Activated B cell treated with CpG ODN at 0.5 μM for 24 hours (primary cell): ENCODE measurements at regions of chr3 and their contacts with region 1.

Region 1: GRCh38 chr3:9932843-9933560 is 632 bp upstream of the CRELD1 start:
- DNase-seq: peak; percentile 83
- ATAC-seq: peak; percentile 71
- H3K4me3 Mint-ChIP-seq: peak overlapping the region; percentile 98
- H3K27ac Mint-ChIP-seq: peak overlapping the region; percentile 98
- H3K4me1 Mint-ChIP-seq: peaks cover 41% of the 10 kb centered on the region
- H3K27me3 Mint-ChIP-seq: no peaks in the 10 kb centered on the region
- CTCF ChIP-seq: peak; percentile 71

Region 2: DNA sequence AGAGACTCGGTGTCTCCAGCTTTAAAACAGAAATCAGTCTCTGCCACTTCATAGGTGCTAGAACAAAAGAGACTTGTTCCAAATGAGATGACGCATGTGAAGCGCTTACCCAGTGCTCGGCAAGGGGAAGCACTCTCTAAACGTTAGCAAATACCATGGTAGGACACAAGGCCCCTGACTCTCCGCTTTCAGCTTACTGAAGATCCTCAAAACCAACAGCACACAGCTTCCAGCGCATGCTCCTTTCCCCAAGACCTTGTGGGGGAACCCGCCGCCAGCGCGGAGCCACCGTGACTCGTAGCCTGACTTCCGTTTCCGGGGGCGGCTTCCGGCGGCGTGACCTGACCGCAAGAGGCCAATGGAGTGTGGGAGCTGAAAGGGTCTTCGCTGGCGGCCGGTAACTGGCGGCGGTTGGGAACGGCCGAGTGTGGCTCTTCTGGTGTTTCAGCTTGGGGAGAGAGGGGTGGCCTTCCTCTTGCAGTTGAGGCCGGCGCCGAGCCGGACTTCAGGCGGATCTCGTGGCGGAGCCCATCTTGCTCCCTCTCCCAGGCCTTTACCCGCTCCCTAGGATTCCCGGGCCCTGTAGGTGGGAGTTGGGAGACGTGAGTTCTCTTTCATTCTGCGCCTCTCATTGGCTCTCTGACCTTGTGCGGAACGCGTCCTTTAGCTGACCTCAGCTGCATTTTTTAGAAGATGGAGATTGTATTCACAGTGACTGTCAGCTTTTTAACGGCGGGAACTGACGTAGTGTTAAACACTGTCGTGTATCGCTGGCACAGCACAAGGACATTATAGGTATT is 570.1 kb before region 1 on chr3 and contains the start of gene THUMPD3:
- CTCF ChIA-PET with region 1: no interaction called
- POLR2A ChIA-PET with region 1: interaction called, 5 read pairs
- intact Hi-C with region 1: loop called (anchors 2 kb)
- DNase-seq: peak; percentile 92
- ATAC-seq: peak; percentile 96
- H3K4me3 Mint-ChIP-seq: peak within 1 kb of the TSS; percentile 99
- H3K27ac Mint-ChIP-seq: peak within 1 kb of the TSS; percentile 98
- H3K4me1 Mint-ChIP-seq: peaks cover 16% of the 10 kb centered on the region
- H3K27me3 Mint-ChIP-seq: no peaks in the 10 kb centered on the region
- CTCF ChIP-seq: no peak
- total RNA-seq, gene THUMPD3: 34.3 and 42.0 TPM in 2 replicates

Region 3: DNA sequence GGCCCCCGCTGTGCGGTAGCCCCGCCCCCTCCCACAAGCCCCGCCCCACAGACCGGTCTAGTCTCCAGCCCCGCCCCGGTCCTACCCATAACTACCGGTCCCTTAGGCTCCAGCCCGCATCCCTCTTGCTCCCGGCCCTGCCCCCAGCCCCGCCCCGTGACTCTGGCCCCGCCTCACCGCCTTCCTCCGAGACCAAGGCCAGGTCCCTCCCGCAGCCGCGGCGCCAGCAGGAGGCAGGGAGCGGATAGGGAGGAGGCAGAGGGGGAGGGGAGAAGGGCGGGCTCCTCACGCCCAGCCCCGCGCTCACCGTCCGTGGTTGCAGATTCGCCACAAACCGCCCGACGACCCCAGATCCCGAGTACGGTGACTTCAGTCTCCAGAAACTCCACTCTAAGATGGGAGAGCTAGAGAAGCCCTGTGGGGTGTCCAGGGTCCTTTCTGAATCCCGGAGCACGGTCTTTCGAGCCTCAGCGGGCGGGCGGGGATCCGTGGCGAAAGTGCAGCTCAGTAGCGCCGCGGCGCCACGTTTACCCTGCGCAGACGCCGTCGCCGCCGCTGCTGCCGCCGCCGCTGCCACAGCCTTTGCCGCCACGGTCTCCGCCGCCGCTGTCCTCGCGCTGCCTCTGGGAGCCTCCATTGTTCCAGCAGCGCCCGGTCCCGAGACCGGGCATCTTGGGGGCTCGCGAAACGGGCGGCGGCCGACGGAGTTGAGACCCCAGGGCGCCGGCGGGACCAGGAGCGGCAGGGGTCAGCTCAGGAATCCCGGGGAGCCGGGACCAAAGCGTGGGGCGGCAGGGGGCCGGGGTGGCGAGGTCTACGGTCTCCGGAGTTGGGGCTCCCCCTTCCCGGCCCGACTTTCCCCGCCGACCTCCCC is 201.6 kb before region 1 on chr3 and contains the start of gene BRPF1:
- CTCF ChIA-PET with region 1: no interaction called
- POLR2A ChIA-PET with region 1: interaction called, 17 read pairs
- intact Hi-C with region 1: loop called (anchors 1 kb)
- DNase-seq: peak; percentile 91
- ATAC-seq: peak; percentile 95
- H3K4me3 Mint-ChIP-seq: peak within 1 kb of the TSS; percentile 95
- H3K27ac Mint-ChIP-seq: peak within 1 kb of the TSS; percentile 99
- H3K4me1 Mint-ChIP-seq: peaks cover 48% of the 10 kb centered on the region
- H3K27me3 Mint-ChIP-seq: no peaks in the 10 kb centered on the region
- CTCF ChIP-seq: no peak
- total RNA-seq, gene BRPF1: 33.5 and 35.2 TPM in 2 replicates

Region 4: DNA sequence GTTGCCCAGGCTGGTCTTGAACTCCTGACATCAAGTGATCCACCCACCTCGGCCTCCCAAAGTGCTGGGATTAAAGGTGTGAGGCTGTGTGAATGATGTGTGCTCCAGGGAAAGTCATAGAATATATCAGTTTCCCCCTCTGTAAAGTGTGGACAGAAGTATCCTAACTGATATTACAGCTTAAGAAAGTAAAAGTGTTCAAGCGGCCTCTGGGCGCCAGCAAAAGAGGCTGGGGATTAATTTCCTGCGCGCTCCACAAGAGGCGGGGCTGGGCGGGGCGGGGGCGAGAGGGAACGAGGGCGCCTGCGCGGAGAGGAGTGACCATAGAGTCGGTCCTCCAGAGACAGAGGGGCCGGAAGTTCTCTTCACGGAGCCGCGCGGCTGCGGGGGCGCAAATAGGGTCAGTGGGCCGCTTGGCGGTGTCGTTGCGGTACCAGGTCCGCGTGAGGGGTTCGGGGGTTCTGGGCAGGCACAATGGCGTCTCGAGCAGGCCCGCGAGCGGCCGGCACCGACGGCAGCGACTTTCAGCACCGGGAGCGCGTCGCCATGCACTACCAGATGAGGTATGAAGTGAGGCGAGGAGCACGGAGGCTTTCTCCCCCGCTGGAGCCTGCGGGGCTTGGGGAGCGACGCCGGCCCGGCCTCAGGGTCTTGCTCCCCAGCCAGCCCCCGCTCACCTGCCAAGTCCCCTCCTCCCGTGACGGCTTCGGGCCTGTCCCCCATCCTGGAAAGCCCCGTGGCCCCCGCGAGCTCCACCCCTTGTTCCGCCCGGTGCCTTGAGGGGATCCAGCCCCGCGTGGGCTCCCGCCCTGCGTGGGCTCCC is 42.5 kb before region 1 on chr3 and contains the start of gene JAGN1:
- CTCF ChIA-PET with region 1: interaction called, 5 read pairs
- POLR2A ChIA-PET with region 1: interaction called, 92 read pairs
- intact Hi-C with region 1: loop called (anchors 1 kb)
- DNase-seq: peak; percentile 85
- ATAC-seq: peak; percentile 86
- H3K4me3 Mint-ChIP-seq: peak within 1 kb of the TSS; percentile 94
- H3K27ac Mint-ChIP-seq: peak within 1 kb of the TSS; percentile 97
- H3K4me1 Mint-ChIP-seq: peaks cover 44% of the 10 kb centered on the region
- H3K27me3 Mint-ChIP-seq: no peaks in the 10 kb centered on the region
- CTCF ChIP-seq: no peak
- total RNA-seq, gene JAGN1: 30.9 and 32.1 TPM in 2 replicates

Region 5: DNA sequence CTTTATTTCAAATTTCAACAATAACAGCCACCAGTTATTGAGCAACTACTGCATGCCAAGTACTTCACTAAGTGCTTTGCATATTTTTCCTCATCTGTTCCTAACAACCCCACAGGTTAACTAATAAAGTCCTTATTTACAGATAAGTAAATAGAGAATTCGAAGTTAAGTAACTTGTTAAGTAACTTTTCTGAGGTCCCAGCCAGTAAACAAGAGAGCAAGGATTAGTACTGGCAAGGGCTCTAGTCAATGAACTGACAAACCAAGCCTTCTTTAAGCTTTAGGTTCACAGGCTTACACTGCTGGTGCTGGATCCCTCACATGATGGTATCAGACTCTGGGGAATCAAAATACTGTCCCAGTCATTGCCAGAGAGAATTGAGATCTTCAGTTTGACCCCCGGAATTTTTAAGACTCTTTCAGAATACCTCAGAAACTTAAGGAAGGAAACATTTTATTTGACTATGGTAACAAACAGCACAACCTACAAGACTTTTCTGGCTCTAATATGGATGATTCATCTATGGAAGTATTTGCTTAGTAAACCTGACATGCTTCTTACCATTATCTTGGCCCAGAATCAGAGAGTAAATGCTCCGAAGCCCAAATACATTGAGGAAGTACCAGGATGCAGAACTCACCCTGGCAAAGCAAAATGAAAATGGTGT is 37.2 kb after region 1 on chr3:
- CTCF ChIA-PET with region 1: no interaction called
- POLR2A ChIA-PET with region 1: no interaction called
- intact Hi-C with region 1: no loop called
- DNase-seq: no peak
- ATAC-seq: no peak
- H3K4me3 Mint-ChIP-seq: no peak overlapping the region
- H3K27ac Mint-ChIP-seq: no peak overlapping the region
- H3K4me1 Mint-ChIP-seq: no peaks in the 10 kb centered on the region
- H3K27me3 Mint-ChIP-seq: no peaks in the 10 kb centered on the region
- CTCF ChIP-seq: no peak

Region 6: DNA sequence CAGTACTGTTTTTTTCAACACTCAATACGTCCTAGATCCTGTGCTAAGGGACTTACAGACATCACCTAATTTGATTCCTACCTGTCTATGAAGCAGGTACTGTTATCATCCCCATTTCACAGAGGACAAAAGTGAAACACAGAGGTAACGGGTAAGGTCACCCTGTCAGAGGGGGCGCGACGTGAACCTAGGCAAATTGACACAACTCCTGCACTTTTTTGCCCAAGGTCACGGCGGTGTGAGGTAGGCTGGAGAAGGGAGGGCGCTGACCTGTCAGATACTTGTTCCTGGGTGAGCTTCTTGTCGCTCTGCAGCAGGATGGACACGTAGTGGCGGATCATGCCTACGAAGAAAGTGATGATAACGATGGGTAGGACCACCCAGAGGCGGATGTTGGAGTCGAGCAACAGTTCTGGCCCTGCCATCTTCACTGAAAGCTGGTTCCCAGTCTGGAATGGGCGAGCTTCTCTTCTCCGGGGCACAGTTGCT is 53.3 kb after region 1 on chr3:
- CTCF ChIA-PET with region 1: interaction called, 4 read pairs
- POLR2A ChIA-PET with region 1: interaction called, 41 read pairs
- intact Hi-C with region 1: loop called (anchors 1 kb)
- DNase-seq: no peak
- ATAC-seq: peak; percentile 28
- H3K4me3 Mint-ChIP-seq: peak overlapping the region; percentile 98
- H3K27ac Mint-ChIP-seq: peak overlapping the region; percentile 100
- H3K4me1 Mint-ChIP-seq: peaks cover 24% of the 10 kb centered on the region
- H3K27me3 Mint-ChIP-seq: no peaks in the 10 kb centered on the region
- CTCF ChIP-seq: no peak

Region 7: DNA sequence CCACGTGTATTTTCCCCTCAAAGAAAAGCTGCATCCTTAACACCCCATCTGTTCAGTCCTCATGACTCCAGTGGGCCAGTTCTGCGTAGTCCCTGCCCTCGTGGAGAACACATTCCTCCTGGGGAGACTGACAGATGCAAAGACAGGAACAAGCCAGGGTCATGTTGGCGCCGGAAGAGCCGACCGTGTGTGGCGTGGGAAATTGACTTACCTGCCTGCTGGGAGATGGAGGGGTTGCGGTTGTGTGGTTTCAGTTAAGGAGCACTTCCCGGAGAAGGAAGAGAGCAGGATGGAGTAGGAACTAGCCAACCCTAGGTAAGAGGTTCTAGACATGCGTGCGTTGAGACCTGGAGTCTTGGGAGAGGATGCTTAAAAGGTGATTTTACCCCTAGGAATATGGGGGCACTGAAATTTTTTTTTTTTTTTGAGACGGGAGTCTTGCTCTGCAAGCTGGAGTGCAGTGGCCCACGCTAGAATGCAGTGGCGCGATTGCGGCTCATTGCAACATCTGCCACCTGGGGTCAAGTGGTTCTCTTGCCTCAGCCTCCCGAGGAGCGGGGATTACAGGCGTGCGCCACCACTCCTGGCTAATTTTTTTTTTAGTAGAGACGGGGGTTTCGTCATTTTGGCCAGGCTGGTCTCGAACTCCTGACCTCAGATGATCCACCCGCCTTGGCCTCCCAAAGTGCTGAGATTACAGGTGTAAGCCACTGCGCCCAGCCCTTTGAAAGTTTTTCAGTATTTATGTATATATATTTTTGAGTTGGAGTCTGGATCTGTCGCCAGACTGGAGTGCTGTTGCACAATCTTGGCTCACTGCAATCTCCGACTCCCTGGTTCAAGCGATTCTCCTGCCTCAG is 209.9 kb after region 1 on chr3:
- CTCF ChIA-PET with region 1: no interaction called
- POLR2A ChIA-PET with region 1: interaction called, 8 read pairs
- intact Hi-C with region 1: loop called (anchors 2 kb)
- DNase-seq: no peak
- ATAC-seq: no peak
- H3K4me3 Mint-ChIP-seq: peak overlapping the region; percentile 97
- H3K27ac Mint-ChIP-seq: peak overlapping the region; percentile 95
- H3K4me1 Mint-ChIP-seq: peaks cover 42% of the 10 kb centered on the region
- H3K27me3 Mint-ChIP-seq: no peaks in the 10 kb centered on the region
- CTCF ChIP-seq: no peak

Region 8: DNA sequence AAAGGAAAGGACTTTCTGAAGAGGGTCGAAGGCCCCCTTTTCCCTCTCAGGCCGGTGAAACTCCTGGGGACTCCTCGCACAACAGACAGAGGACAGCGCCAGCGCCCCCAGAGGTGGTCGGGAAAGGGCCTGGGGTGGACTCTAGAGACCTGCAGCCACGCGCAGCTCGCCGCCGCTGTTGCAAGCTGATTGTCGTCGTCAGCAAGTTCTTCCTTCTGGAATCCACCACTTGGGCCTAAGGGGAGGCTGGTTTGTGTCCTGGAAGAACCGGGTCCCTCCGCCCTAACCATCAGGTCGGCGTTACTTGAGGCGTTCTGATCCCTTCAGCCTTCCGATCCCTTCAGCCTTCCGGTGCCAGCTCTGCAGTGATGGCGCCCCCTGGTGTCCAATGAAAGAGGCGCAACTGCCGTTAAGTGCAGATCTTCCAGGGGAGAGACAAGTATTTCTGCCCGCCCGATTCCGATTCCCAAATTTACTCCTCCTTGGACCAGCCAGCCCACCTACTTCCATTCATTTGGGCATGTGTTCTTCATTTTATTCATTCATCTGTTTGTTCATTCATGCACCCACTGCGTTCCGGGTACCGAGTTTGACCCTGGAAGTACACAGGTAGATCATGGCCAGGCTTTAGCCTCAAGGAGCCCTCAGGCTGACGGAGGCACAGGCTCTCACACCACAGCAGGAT is 805.8 kb after region 1 on chr3:
- CTCF ChIA-PET with region 1: interaction called, 4 read pairs
- POLR2A ChIA-PET with region 1: no interaction called
- intact Hi-C with region 1: loop called (anchors 2 kb)
- DNase-seq: peak; percentile 70
- ATAC-seq: peak; percentile 82
- H3K4me3 Mint-ChIP-seq: peak overlapping the region; percentile 79
- H3K27ac Mint-ChIP-seq: no peak overlapping the region
- H3K4me1 Mint-ChIP-seq: peaks cover 12% of the 10 kb centered on the region
- H3K27me3 Mint-ChIP-seq: peaks cover 40% of the 10 kb centered on the region
- CTCF ChIP-seq: peak; percentile 46